ENCODE measurements at regions of chr11 and their contacts with region 1.

Region 1: DNA sequence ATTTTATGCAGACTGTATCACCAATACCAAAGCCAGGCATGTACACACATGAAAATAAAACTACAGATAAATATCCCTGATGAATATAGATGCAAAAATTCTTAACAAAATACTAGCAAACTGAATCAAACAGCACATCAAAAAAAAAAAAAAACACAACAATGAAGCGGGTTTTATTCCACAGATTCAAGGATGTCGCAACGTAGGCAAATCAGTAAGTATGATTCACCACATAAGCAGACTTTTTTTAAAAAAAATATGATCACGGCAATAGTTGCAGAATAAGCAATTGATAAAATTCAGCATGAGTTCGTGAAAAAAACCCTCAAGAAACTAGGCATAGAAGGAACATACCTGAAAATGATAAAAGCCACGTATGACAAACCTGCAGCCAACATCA is 21.3 kb downstream of the OR51F1 start:
- DNase-seq: no peak
- ATAC-seq: no peak
- H3K4me3 ChIP-seq: no peak overlapping the region
- H3K27ac ChIP-seq: no peak overlapping the region
- H3K4me1 ChIP-seq: no peaks in the 10 kb centered on the region
- H3K27me3 ChIP-seq: peaks cover 0 to 3% of the 10 kb centered on the region in 2 experiments; a peak in 1 of 5 replicates
- CTCF ChIP-seq: no peak
- EP300 ChIP-seq: no peak
- POLR2A ChIP-seq: no peak
- RAD21 ChIP-seq: no peak

Region 2: DNA sequence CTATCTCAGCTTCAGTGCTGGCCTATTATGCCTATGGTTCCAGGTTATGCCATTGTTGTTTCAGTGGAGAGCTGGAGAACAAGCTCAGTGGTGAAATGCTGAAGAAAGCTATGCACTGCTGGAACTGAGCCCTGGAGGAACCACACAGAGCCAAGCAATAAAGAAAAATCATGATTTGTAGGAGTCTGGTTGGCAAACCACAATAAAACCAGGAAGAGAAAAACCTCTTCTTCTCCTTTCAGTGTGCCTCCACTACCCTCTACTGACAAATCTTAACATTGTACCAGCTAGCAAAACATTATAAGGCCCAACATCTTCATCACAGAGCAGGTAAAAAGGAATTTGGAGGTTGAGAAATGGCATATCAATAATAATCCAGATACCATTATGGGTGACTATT is 78.0 kb after region 1 on chr11:
- CTCF ChIA-PET with region 1: no interaction called
- POLR2A ChIA-PET with region 1: no interaction called
- in situ Hi-C with region 1: loop called (anchors 25 kb)
- intact Hi-C with region 1: no loop called
- DNase-seq: no peak
- ATAC-seq: no peak
- H3K4me3 ChIP-seq: no peak overlapping the region
- H3K27ac ChIP-seq: no peak overlapping the region
- H3K4me1 ChIP-seq: no peaks in the 10 kb centered on the region
- H3K27me3 ChIP-seq: no peaks in the 10 kb centered on the region; a peak in 1 of 5 replicates
- CTCF ChIP-seq: 0 out of 2 replicates have a peak, but pooled peaks have one; percentile 5
- EP300 ChIP-seq: no peak
- POLR2A ChIP-seq: no peak
- RAD21 ChIP-seq: no peak

Measured in HepG2 (cell line).